ENCODE measurements at regions of chr12 and their contacts with region 1.

Region 1: DNA sequence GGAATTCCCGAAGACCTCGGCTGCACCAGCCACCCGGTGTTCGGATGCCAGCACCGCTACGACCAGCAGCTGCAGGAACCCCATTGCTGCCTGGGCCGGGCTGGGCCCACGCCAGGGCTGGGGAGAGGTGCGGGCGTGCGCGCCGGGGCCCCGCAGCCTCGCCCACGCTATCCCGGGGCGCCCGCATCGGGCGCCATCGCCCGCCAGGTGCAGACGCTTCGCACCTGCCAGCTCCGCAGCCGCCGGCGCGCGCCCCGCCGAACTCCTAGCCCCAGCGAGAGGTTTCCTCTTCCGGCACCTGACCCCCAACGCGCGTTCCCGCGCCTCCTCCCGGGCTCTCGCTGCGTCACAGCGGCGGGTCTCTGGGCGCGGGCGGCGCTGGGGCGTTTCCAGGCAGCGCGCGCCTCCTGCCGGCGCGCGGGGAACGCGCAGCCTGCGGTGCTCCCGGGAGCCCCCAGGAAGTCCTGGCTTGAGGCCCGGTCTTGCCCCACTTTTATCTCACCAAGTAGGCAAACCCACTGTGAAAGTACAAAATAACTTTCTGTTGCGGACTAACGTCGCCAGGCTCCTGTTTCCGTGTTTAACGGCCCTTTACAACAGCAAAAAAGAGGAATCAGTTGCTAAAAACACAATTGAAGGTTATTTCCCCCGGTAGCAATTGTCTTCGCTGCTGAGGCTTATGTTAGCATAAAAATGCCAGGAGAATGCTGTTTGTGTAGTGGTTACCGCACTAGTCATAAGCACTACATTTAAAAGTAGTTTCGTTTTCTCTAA is at the start of gene TM7SF3:
- DNase-seq: peak; percentile 95 to 98 (median 97)
- H3K4me3 ChIP-seq: peak within 1 kb of the TSS; percentile 89
- H3K4me3 Mint-ChIP-seq: peak within 1 kb of the TSS; percentile 80 to 98 (median 94)
- H3K27ac ChIP-seq: peak within 1 kb of the TSS; percentile 92
- H3K27ac Mint-ChIP-seq: peak within 1 kb of the TSS; percentile 95 to 98 (median 97)
- H3K4me1 ChIP-seq: peaks cover 33% of the 10 kb centered on the region
- H3K4me1 Mint-ChIP-seq: peaks cover 46 to 57% (median 53%) of the 10 kb centered on the region in 3 donors
- H3K27me3 ChIP-seq: no peaks in the 10 kb centered on the region
- H3K27me3 Mint-ChIP-seq: no peaks in the 10 kb centered on the region
- total RNA-seq, gene TM7SF3: 38.8 to 42.9 TPM

Region 2: GRCh38 chr12:26832822-26833742 is 181.2 kb before region 1 on chr12 and contains the start of gene ITPR2:
- CTCF ChIA-PET with region 1: interaction called, 15 read pairs
- POLR2A ChIA-PET with region 1: interaction called, 9 read pairs
- DNase-seq: peak; percentile 88 to 93 (median 90)
- H3K4me3 ChIP-seq: peak within 1 kb of the TSS; percentile 79
- H3K4me3 Mint-ChIP-seq: peak within 1 kb of the TSS; percentile 94 to 100 (median 97)
- H3K27ac ChIP-seq: peak within 1 kb of the TSS; percentile 85
- H3K27ac Mint-ChIP-seq: peak within 1 kb of the TSS; percentile 94 to 100 (median 98)
- H3K4me1 ChIP-seq: peaks cover 20% of the 10 kb centered on the region
- H3K4me1 Mint-ChIP-seq: peaks cover 42 to 50% (median 50%) of the 10 kb centered on the region in 3 donors
- H3K27me3 ChIP-seq: no peaks in the 10 kb centered on the region
- H3K27me3 Mint-ChIP-seq: no peaks in the 10 kb centered on the region
- total RNA-seq, gene ITPR2: 24.0 to 29.4 TPM

Region 3: GRCh38 chr12:26884765-26885576 is 129.3 kb before region 1 on chr12:
- CTCF ChIA-PET with region 1: interaction called, 10 read pairs
- POLR2A ChIA-PET with region 1: no interaction called
- DNase-seq: peak; percentile 71 to 86 (median 76)
- H3K4me3 ChIP-seq: peak overlapping the region; percentile 31
- H3K4me3 Mint-ChIP-seq: peak overlapping the region in 6 of 7 donors; percentile 50 to 81 (median 74)
- H3K27ac ChIP-seq: no peak overlapping the region
- H3K27ac Mint-ChIP-seq: peak overlapping the region in 1 of 8 donors; percentile 21
- H3K4me1 ChIP-seq: no peaks in the 10 kb centered on the region
- H3K4me1 Mint-ChIP-seq: peaks cover 8 to 9% (median 8%) of the 10 kb centered on the region in 3 donors
- H3K27me3 ChIP-seq: no peaks in the 10 kb centered on the region
- H3K27me3 Mint-ChIP-seq: peaks cover 9 to 11% of the 10 kb centered on the region in 2 donors

Region 4: DNA sequence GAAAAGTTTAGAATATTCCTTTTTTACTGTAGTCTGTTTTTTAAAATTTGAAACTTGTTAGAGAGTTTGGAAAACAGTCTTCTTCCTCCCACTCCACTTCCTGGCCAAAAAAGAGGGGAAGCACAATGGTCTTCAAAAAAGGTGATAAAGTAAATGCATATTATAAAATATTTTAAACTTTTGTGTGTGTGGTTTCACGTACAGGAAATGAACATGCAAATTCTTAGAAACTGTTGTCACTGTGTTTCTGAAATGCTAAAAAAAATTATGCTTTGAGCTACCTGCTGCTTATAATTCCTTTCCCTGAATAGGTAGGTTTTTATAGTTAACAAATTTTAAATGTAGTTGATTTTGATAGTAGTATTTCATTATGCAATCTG is 73.1 kb before region 1 on chr12:
- CTCF ChIA-PET with region 1: interaction called, 12 read pairs
- POLR2A ChIA-PET with region 1: no interaction called
- DNase-seq: peak in 2 of 5 donors; percentile 14 to 31
- H3K4me3 ChIP-seq: peak overlapping the region; percentile 45
- H3K4me3 Mint-ChIP-seq: peak overlapping the region; percentile 79 to 99 (median 97)
- H3K27ac ChIP-seq: peak overlapping the region; percentile 58
- H3K27ac Mint-ChIP-seq: peak overlapping the region; percentile 86 to 99 (median 93)
- H3K4me1 ChIP-seq: peaks cover 46% of the 10 kb centered on the region
- H3K4me1 Mint-ChIP-seq: peaks cover 72 to 86% (median 77%) of the 10 kb centered on the region in 3 donors
- H3K27me3 ChIP-seq: no peaks in the 10 kb centered on the region
- H3K27me3 Mint-ChIP-seq: peaks cover 0 to 2% of the 10 kb centered on the region in 2 donors

Region 5: GRCh38 chr12:27003421-27004381 is 10.6 kb before region 1 on chr12:
- CTCF ChIA-PET with region 1: interaction called, 21 read pairs
- POLR2A ChIA-PET with region 1: no interaction called
- DNase-seq: no peak
- H3K4me3 ChIP-seq: no peak overlapping the region
- H3K4me3 Mint-ChIP-seq: no peak overlapping the region
- H3K27ac ChIP-seq: no peak overlapping the region
- H3K27ac Mint-ChIP-seq: peak overlapping the region in 1 of 8 donors; percentile 45
- H3K4me1 ChIP-seq: no peaks in the 10 kb centered on the region
- H3K4me1 Mint-ChIP-seq: peaks cover 26 to 51% (median 51%) of the 10 kb centered on the region in 3 donors
- H3K27me3 ChIP-seq: no peaks in the 10 kb centered on the region
- H3K27me3 Mint-ChIP-seq: no peaks in the 10 kb centered on the region

Region 6: GRCh38 chr12:27024291-27024690 is 10.0 kb after region 1 on chr12:
- CTCF ChIA-PET with region 1: interaction called, 11 read pairs
- POLR2A ChIA-PET with region 1: interaction called, 21 read pairs
- DNase-seq: no peak
- H3K4me3 ChIP-seq: peak overlapping the region; percentile 17
- H3K4me3 Mint-ChIP-seq: peak overlapping the region in 6 of 7 donors; percentile 53 to 100 (median 97)
- H3K27ac ChIP-seq: no peak overlapping the region
- H3K27ac Mint-ChIP-seq: peak overlapping the region in 1 of 8 donors; percentile 10
- H3K4me1 ChIP-seq: peaks cover 30% of the 10 kb centered on the region
- H3K4me1 Mint-ChIP-seq: peaks cover 42 to 58% (median 51%) of the 10 kb centered on the region in 3 donors
- H3K27me3 ChIP-seq: no peaks in the 10 kb centered on the region
- H3K27me3 Mint-ChIP-seq: no peaks in the 10 kb centered on the region

Region 7: GRCh38 chr12:27305673-27306456 is 291.6 kb after region 1 on chr12:
- CTCF ChIA-PET with region 1: interaction called, 21 read pairs
- POLR2A ChIA-PET with region 1: no interaction called
- DNase-seq: peak in 2 of 5 donors; percentile 11 to 37
- H3K4me3 ChIP-seq: no peak overlapping the region
- H3K4me3 Mint-ChIP-seq: no peak overlapping the region
- H3K27ac ChIP-seq: no peak overlapping the region
- H3K27ac Mint-ChIP-seq: peak overlapping the region in 3 of 8 donors; percentile 21 to 42 (median 40)
- H3K4me1 ChIP-seq: no peaks in the 10 kb centered on the region
- H3K4me1 Mint-ChIP-seq: no peaks in the 10 kb centered on the region
- H3K27me3 ChIP-seq: no peaks in the 10 kb centered on the region
- H3K27me3 Mint-ChIP-seq: no peaks in the 10 kb centered on the region

Measured in CD8-positive, alpha-beta memory T cell (primary cell).